ENCODE measurements at regions of chr2 and their contacts with region 1.

Region 1: DNA sequence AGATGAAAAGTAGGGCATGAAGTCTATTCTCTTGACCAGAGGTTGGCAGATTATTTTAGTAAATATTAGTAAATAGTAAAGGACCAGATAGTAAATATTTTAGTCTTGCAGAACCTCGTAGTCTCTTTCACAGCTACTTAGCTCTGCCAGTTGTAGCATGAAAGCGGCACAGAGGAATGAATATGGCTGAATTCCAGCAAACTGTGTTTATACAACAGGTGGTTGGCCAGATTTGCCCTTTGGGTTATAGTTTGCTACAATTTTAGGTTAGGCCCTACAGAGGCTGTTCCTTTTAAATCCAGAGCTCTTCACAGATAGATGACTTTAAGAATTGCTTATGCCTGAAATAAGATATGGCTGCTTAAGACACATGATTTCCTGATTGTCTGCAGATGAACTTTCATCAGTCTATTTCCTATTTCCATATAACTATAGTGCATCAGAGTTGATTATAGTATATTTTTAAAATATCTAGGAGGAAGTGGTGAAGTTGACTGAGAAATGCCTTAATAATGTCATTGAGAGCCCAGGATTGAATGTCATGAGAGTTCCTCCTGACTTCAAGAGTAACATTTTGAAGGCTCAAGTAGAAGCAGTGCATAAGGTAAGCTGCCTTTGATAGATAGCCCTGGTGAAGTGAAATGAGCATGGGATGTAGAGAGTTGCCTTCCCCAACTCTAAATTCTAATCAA is 80.5 kb downstream of the TMEM185B start:
- DNase-seq: no peak
- H3K4me3 ChIP-seq: no peak overlapping the region
- H3K27ac ChIP-seq: no peak overlapping the region
- H3K4me1 ChIP-seq: no peaks in the 10 kb centered on the region
- H3K27me3 ChIP-seq: no peaks in the 10 kb centered on the region
- CTCF ChIP-seq: no peak
- POLR2A ChIP-seq: no peak

Region 2: DNA sequence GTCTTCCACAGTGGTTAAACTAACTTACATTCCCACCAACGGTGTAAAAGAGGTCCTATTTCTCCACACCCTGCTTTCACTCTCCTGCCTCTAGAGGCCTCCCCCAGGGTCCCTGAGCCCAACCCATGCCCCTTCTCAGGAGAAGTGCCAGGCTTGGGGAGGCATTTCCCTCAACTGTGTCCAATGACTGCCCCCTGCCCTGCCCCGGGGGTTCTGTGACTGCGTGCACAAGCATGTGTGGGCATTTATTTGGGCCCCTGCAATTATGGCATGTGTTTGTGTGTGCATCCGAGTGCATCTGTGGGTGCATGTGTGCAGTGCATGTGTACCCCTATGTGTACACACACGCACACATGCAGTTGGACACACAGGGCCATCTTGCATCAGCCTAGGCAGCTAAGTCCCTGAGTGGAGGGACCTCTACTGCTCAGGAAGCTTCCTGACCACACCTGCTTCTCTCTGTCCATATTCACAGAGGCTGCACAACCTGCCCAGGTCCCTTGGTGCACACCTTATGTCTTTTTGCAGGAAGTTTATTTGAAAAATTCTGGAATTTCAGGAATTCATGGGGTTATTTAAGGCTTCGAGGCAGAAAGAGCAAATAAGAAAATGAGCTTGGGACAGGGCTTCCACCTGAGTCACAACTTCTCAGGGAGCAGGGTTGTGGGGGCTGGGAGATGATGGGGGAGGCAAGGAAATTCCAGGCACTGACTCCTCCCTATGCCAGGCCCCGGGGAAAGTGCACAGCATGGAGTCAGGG is 260.8 kb after region 1 on chr2:
- intact Hi-C with region 1: loop called (anchors 5 kb)
- DNase-seq: peak in 1 of 2 donors; percentile 48
- H3K4me3 ChIP-seq: no peak overlapping the region
- H3K27ac ChIP-seq: no peak overlapping the region
- H3K4me1 ChIP-seq: no peaks in the 10 kb centered on the region
- H3K27me3 ChIP-seq: no peaks in the 10 kb centered on the region
- CTCF ChIP-seq: no peak
- POLR2A ChIP-seq: no peak

Measured in breast epithelium (tissue), 4 donors.